Endothelial cell of umbilical vein (primary cell): ENCODE measurements at regions of chr20 and their contacts with region 1.

Region 1: GRCh38 chr20:16491294-16491914 is 81.8 kb downstream of the KIF16B start:
- DNase-seq: no peak
- H3K4me3 ChIP-seq: no peak overlapping the region
- H3K27ac ChIP-seq: no peak overlapping the region
- H3K4me1 ChIP-seq: no peaks in the 10 kb centered on the region
- H3K27me3 ChIP-seq: no peaks in the 10 kb centered on the region
- CTCF ChIP-seq: no peak
- POLR2A ChIP-seq: no peak

Region 2: GRCh38 chr20:16528078-16528477 is 36.7 kb after region 1 on chr20:
- CTCF ChIA-PET with region 1: no interaction called
- POLR2A ChIA-PET with region 1: no interaction called
- dilution Hi-C with region 1: no loop called
- intact Hi-C with region 1: loop called (anchors 1 kb)
- DNase-seq: no peak
- H3K4me3 ChIP-seq: no peak overlapping the region
- H3K27ac ChIP-seq: no peak overlapping the region
- H3K4me1 ChIP-seq: no peaks in the 10 kb centered on the region
- H3K27me3 ChIP-seq: no peaks in the 10 kb centered on the region
- CTCF ChIP-seq: no peak
- POLR2A ChIP-seq: no peak

Region 3: DNA sequence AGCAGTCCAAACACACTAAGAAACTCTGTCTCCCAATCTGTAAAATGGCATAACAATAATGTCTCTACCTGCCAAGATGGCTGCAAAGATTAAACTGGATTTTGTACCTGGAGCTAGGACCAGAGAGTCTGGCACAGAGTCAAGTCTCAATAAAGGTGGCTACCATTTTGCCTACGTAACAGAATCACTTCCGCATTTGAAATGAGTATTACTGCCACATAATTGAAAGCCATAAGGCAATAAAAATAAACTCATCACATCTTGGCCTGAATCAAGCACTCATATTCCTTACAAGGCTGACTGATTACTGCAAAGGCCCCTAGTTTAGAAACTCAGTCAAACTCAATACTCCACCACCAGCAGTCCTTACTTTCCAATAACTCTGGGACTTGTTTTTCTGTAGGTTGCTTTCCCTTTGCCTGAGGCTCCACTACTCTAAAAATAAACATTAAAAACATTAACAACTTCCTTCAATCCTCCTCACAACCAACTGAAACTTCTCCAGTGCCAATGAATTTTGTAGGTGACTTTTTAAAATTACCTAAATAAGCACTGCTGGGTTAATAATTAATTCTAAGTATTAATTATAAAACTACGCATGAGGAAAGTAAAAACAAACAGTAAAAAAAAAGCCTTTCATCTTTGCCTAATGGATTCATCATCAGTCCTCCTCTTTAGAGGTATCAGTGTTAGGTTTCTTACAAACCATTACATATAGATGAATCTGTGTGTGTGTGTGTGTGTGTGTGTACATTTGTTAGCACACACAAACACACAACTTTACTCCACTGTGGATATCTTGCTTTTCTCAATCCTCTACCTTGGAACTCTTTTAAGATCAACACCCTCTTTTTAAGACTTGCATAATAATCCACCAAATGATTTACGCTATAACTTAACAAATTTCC is 78.1 kb after region 1 on chr20:
- CTCF ChIA-PET with region 1: no interaction called
- POLR2A ChIA-PET with region 1: no interaction called
- dilution Hi-C with region 1: no loop called
- intact Hi-C with region 1: no loop called
- DNase-seq: no peak
- H3K4me3 ChIP-seq: no peak overlapping the region
- H3K27ac ChIP-seq: no peak overlapping the region
- H3K4me1 ChIP-seq: peaks cover 9% of the 10 kb centered on the region
- H3K27me3 ChIP-seq: no peaks in the 10 kb centered on the region
- CTCF ChIP-seq: no peak
- POLR2A ChIP-seq: no peak